ENCODE measurements at regions of chr15 and their contacts with region 1.

Region 1: DNA sequence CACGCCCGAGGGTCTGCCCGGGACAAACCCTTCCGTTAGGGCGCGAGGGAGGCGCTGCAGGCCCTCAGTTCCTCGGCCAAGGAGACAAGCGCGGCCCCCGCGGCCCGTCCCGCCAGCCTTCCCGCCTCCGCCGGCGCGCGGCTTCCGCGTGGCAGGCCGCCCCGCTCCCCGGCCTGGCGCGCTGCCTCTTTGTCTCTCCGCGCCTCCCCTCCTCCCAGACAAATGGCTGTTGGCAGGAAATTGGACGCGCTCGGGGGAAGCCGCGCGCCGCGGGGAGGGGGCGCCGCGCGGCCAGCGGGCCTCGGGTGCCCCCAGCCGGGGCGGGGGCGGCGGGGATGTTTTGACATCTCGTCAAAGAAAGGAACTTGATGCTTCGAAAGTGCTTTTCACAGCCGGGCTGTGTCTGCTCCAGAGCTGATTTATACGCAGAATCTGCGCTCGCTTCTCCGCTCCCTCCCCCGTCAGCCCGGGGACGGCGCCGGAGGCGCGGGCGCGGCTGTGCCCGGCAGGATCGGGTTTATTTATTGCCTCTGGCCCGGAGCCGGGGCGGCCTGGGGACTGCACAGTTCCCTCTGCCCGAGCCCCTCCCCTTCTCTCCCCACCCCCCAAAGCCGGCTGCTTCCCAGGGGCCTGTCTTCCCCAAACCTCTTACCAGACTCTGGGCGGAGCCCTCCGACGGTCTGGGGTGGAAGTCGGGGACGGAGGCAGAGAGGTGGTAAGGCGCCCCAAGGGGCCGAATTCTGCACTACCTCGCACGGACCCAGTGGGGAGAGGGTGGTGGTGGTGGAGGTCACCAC is 20.7 kb downstream of the SHF start:
- DNase-seq: peak; percentile 79 to 93 (median 89)
- H3K4me3 ChIP-seq: peak overlapping the region; percentile 38 to 66 (median 52)
- H3K27ac ChIP-seq: peak overlapping the region; percentile 74 to 97 (median 94)
- H3K4me1 ChIP-seq: peaks cover 6 to 21% of the 10 kb centered on the region in 2 donors
- H3K27me3 ChIP-seq: no peaks in the 10 kb centered on the region
- CTCF ChIP-seq: peak; percentile 52 to 76 (median 64)
- POLR2A ChIP-seq: peak; percentile 29 to 46

Region 2: DNA sequence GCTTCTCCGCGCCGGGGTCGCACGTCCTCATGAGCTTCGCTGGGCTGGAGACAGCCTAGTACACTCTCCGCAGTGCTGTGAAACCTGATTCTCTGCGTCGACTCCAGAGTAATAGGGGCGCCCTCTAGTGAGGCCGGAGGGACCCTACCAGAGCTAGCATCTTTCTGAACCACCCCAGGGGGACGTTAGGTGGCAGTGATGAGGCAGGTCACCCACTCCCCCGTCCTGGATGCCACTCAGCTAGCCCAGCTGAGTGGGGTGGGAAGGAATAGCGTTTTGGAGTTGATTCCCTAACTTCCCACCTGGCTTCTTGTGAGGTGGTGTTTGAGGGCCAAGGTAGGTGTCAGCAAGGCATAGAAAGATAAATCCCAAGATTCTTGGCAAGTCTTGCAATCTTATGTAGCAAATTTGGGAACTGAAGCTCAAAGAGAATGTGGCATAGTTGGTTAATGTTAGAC is 48.9 kb before region 1 on chr15:
- intact Hi-C with region 1: loop called in 1 of 2 experiments (anchors 5 kb)
- DNase-seq: peak; percentile 87 to 96 (median 93)
- H3K4me3 ChIP-seq: no peak overlapping the region
- H3K27ac ChIP-seq: no peak overlapping the region
- H3K4me1 ChIP-seq: peaks cover 6 to 13% of the 10 kb centered on the region in 2 donors
- H3K27me3 ChIP-seq: peaks cover 45% of the 10 kb centered on the region
- CTCF ChIP-seq: peak; percentile 93 to 99 (median 98)
- POLR2A ChIP-seq: no peak

Region 3: GRCh38 chr15:45200001-45200798 is 33.2 kb after region 1 on chr15:
- intact Hi-C with region 1: loop called in 1 of 2 experiments (anchors 5 kb)
- DNase-seq: peak; percentile 95 to 100 (median 97)
- H3K4me3 ChIP-seq: peak overlapping the region in 3 of 4 donors; percentile 32 to 70 (median 40)
- H3K27ac ChIP-seq: peak overlapping the region; percentile 93 to 99 (median 97)
- H3K4me1 ChIP-seq: peaks cover 7 to 8% of the 10 kb centered on the region in 2 donors
- H3K27me3 ChIP-seq: no peaks in the 10 kb centered on the region
- CTCF ChIP-seq: no peak
- POLR2A ChIP-seq: peak; percentile 91 to 93

Region 4: DNA sequence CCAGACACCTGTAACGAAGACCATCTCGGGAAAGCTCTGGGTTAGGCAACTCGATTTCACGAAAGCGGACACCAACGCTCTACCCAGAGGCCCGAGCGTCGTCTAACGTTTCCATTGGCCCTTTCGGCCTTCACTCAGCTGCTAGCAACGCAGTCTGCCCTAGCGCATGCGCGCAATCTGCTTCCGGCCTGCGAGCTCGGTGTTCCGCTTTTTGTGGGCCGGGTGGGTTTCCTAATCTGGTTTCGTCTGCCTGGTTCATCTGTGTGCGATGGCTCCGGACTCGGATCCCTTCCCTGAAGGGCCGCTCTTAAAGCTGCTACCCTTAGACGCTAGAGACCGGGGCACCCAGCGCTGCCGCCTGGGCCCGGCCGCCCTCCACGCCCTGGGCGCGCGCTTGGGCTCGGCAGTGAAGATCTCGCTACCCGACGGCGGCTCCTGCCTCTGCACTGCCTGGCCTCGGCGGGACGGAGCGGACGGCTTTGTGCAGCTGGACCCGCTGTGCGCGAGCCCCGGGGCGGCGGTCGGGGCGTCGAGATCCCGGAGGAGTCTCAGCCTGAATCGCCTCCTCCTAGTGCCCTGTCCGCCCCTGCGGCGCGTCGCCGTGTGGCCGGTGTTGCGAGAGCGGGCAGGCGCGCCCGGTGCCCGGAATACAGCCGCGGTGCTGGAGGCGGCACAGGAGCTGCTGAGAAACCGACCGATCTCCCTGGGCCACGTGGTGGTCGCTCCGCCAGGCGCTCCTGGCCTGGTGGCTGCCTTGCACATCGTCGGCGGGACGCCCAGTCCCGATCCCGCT is 235.3 kb after region 1 on chr15:
- intact Hi-C with region 1: loop called (anchors 10 kb)
- DNase-seq: peak; percentile 94 to 99 (median 97)
- H3K4me3 ChIP-seq: peak overlapping the region; percentile 30 to 98 (median 78)
- H3K27ac ChIP-seq: peak overlapping the region; percentile 69 to 94 (median 89)
- H3K4me1 ChIP-seq: peaks cover 12 to 30% of the 10 kb centered on the region in 2 donors
- H3K27me3 ChIP-seq: no peaks in the 10 kb centered on the region
- CTCF ChIP-seq: peak in 2 of 6 experiments; percentile 2 to 5
- POLR2A ChIP-seq: peak; percentile 45 to 65